Activated B cell treated with CpG ODN at 0.5 μM for 24 hours (primary cell): ENCODE measurements at regions of chr5 and their contacts with region 1.

Region 1: DNA sequence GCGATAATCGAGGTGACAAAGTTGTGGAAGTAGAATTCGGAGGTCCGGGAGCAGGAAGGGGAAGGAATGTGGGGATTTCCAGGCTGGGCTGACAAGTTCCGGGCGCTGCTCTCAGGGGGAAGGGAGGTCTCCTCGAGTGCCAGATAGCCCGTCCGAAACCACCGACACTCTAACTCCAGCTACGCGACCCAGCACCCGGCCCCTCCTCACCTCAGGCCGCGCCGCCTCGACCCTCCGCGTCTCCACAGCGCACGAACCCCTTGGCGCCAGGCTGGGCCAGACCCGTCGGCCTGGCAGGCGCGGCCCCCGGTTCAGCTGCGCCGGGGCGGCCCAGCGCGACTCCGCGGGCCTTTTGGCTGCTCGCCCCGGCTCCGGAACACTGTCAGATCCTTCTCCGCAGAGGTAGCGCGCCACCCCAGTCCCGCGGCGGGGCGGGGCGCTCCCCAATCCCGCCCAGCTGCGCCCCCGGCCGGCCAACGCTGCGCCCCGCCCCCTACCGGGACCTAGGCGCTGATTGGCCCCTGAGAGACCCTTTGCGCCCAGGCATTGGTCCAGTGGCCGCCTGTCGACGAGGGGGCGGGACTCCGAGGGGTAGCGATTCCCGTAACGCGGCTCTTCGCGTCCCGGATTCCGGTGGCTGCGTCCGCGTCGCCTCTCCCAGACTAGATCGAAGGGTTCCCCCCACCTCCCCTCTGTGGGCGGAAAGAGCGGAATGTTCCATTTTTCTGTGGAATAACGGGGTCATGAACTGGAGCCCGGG is at the start of gene IL6ST:
- DNase-seq: peak; percentile 95
- ATAC-seq: peak; percentile 92
- H3K4me3 Mint-ChIP-seq: peak within 1 kb of the TSS; percentile 96
- H3K27ac Mint-ChIP-seq: peak within 1 kb of the TSS; percentile 95
- H3K4me1 Mint-ChIP-seq: peaks cover 38% of the 10 kb centered on the region
- H3K27me3 Mint-ChIP-seq: peaks cover 5% of the 10 kb centered on the region
- CTCF ChIP-seq: no peak
- total RNA-seq, gene IL6ST: 39.8 and 48.3 TPM in 2 replicates

Region 2: DNA sequence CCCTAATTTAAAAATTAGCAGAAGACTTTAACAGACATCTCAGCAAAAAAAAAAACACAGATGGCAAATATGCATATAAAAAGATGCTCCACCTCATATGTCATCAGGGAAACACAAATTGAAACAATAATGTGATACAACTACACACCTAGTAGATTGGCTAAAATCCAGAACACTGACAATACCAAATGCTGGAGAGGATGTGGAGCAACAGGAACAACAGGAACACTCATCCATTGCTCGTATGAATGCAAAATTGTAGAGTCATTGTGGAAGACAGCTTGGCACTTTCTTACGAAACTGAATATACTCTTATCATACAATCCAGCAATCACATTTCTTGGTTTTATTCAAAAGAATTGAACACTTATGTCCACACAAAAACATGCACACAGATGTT is 789.8 kb before region 1 on chr5:
- CTCF ChIA-PET with region 1: no interaction called
- POLR2A ChIA-PET with region 1: no interaction called
- intact Hi-C with region 1: no loop called
- DNase-seq: no peak
- ATAC-seq: no peak
- H3K4me3 Mint-ChIP-seq: no peak overlapping the region
- H3K27ac Mint-ChIP-seq: no peak overlapping the region
- H3K4me1 Mint-ChIP-seq: no peaks in the 10 kb centered on the region
- H3K27me3 Mint-ChIP-seq: peaks cover 29% of the 10 kb centered on the region
- CTCF ChIP-seq: no peak

Region 3: DNA sequence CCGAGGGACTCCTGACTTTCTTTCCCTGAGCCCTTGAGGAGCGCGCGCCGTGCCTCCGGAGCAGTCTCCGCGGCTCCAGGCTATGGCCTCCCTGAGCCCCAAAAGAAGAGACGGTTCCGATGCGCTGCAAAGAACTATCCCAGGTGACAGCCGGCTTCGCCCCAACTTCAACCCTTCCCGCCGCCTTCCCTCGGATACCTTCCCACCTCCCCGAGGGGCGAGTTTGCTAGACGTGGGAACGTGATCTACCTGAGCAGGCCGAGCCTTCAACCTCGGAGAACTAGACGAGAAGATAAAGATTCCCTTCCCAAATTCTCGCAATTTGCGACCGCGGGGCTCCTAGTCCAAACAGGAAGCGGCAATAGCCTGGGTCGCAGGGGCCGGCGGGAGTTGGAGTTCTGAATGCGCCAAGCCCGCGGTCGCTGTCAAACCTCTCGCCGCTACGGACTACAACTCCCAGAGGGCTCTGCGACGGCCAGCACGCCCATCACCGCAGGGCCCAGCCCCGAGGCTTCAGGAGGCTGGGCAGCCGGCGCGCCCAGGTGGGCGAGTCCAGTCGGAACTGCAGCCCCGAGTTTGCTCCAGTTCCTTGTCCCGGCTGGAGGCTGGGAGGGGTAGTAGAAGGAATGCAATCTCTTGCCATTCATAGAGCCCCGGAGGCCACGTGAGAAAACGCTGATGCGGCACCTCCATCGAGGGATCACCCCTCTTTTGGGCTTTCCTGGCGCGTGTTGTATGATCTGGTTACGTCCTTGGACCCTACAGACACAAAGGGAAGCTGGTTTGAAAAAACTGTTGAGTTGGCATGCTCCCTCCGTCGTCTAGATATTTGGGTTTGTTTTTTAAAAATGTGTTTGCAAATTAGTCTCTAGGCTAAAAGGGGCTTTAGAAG is 282.5 kb before region 1 on chr5 and contains the start of gene SLC38A9:
- CTCF ChIA-PET with region 1: no interaction called
- POLR2A ChIA-PET with region 1: no interaction called
- intact Hi-C with region 1: loop called (anchors 5 kb)
- DNase-seq: peak; percentile 91
- ATAC-seq: peak; percentile 100
- H3K4me3 Mint-ChIP-seq: peak within 1 kb of the TSS; percentile 100
- H3K27ac Mint-ChIP-seq: peak within 1 kb of the TSS; percentile 92
- H3K4me1 Mint-ChIP-seq: peaks cover 17% of the 10 kb centered on the region
- H3K27me3 Mint-ChIP-seq: no peaks in the 10 kb centered on the region
- CTCF ChIP-seq: no peak
- total RNA-seq, gene SLC38A9: 26.6 and 29.9 TPM in 2 replicates

Region 4: DNA sequence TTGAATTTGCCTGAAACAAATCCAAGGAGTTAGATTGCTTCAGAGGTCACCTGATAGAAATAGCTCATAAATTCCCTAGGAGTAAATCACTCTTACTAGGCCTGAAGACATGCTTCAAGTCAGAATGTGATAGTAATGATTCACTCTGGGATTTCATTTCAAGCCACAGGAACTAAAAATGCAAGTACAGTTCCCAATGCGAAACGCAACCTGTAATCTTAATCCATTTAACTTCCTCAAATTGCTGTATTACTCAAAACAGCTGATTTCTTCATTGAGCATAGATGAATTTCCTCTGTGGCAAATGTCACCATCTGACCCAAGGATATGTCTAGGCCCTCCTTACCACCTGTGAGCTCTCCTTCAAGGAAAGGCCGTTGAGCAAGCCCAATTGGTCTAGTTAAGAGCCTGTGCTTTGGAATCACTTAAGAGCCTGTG is 32.1 kb after region 1 on chr5:
- CTCF ChIA-PET with region 1: no interaction called
- POLR2A ChIA-PET with region 1: interaction called, 6 read pairs
- intact Hi-C with region 1: loop called (anchors 2 kb)
- DNase-seq: no peak
- ATAC-seq: peak; percentile 40
- H3K4me3 Mint-ChIP-seq: no peak overlapping the region
- H3K27ac Mint-ChIP-seq: no peak overlapping the region
- H3K4me1 Mint-ChIP-seq: peaks cover 4% of the 10 kb centered on the region
- H3K27me3 Mint-ChIP-seq: peaks cover 4% of the 10 kb centered on the region
- CTCF ChIP-seq: no peak

Region 5: DNA sequence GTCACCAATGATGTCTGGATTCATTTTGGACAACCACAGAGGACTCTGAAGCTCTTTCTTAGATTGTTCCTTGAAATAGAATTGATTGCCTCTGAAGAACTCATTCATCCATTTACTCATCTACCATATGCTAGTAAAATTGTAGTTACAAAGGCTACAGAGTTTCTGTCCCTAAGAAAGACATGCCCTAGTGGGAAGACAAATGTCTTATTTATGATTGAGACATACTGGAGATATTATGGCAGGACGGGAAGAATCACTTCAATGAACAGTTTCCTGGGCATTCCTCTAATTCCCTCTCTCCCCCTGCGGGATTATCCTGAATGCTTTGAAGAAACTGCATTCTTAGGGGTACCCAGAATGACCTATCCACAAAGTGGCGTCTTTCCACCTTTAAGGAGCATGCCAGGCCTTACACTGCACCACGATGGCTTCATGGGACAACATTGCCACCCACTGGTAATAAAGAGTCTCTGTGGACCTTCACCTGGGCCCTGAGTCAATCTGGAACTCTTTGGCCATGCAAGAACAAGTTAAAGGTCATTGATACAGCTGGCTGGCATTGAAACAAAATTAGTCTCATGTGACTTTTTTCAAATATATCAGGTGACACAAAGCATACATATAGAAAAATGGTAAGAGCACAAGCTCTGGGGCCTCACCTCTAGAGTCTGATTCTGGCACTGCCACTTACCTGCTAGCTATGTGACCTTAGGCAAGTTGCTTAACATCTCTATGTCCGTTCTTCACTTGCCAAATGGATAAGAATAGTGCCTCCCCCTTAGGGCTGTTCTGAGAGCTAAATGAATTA is 206.3 kb after region 1 on chr5:
- CTCF ChIA-PET with region 1: no interaction called
- POLR2A ChIA-PET with region 1: interaction called, 4 read pairs
- intact Hi-C with region 1: loop called (anchors 1 kb)
- DNase-seq: no peak
- ATAC-seq: peak; percentile 100
- H3K4me3 Mint-ChIP-seq: no peak overlapping the region
- H3K27ac Mint-ChIP-seq: no peak overlapping the region
- H3K4me1 Mint-ChIP-seq: peaks cover 4% of the 10 kb centered on the region
- H3K27me3 Mint-ChIP-seq: no peaks in the 10 kb centered on the region
- CTCF ChIP-seq: no peak

Region 6: GRCh38 chr5:56909294-56910209 is 914.8 kb after region 1 on chr5 and contains the start of gene SETD9:
- CTCF ChIA-PET with region 1: no interaction called
- POLR2A ChIA-PET with region 1: interaction called, 3 read pairs
- intact Hi-C with region 1: loop called (anchors 1 kb)
- DNase-seq: peak; percentile 93
- ATAC-seq: peak; percentile 85
- H3K4me3 Mint-ChIP-seq: peak within 1 kb of the TSS; percentile 96
- H3K27ac Mint-ChIP-seq: peak within 1 kb of the TSS; percentile 96
- H3K4me1 Mint-ChIP-seq: peaks cover 20% of the 10 kb centered on the region
- H3K27me3 Mint-ChIP-seq: no peaks in the 10 kb centered on the region
- CTCF ChIP-seq: no peak
- total RNA-seq, gene SETD9: 3.4 and 6.2 TPM in 2 replicates